Activated naive CD4-positive, alpha-beta T cell treated with anti-CD3 and anti-CD28 coated beads, Interleukin-2, amount 10 ng/mL, durations not matched to agents 7 days and 5 days (primary cell): ENCODE measurements at regions of chr6 and their contacts with region 1.

Region 1: GRCh38 chr6:46848684-46849360 is 55.6 kb downstream of the MEP1A start:
- DNase-seq: peak; percentile 68
- H3K4me3 Mint-ChIP-seq: no peak overlapping the region
- H3K27ac Mint-ChIP-seq: no peak overlapping the region
- H3K4me1 Mint-ChIP-seq: peaks cover 5% of the 10 kb centered on the region
- H3K27me3 Mint-ChIP-seq: peaks cover 18% of the 10 kb centered on the region

Region 2: GRCh38 chr6:47047479-47048407 is 198.9 kb after region 1 on chr6:
- CTCF ChIA-PET with region 1: interaction called, 16 read pairs
- DNase-seq: peak; percentile 41
- H3K4me3 Mint-ChIP-seq: no peak overlapping the region
- H3K27ac Mint-ChIP-seq: no peak overlapping the region
- H3K4me1 Mint-ChIP-seq: no peaks in the 10 kb centered on the region
- H3K27me3 Mint-ChIP-seq: no peaks in the 10 kb centered on the region